Thyroid gland (tissue), 4 donors: ENCODE measurements at regions of chr1 and their contacts with region 1.

Region 1: DNA sequence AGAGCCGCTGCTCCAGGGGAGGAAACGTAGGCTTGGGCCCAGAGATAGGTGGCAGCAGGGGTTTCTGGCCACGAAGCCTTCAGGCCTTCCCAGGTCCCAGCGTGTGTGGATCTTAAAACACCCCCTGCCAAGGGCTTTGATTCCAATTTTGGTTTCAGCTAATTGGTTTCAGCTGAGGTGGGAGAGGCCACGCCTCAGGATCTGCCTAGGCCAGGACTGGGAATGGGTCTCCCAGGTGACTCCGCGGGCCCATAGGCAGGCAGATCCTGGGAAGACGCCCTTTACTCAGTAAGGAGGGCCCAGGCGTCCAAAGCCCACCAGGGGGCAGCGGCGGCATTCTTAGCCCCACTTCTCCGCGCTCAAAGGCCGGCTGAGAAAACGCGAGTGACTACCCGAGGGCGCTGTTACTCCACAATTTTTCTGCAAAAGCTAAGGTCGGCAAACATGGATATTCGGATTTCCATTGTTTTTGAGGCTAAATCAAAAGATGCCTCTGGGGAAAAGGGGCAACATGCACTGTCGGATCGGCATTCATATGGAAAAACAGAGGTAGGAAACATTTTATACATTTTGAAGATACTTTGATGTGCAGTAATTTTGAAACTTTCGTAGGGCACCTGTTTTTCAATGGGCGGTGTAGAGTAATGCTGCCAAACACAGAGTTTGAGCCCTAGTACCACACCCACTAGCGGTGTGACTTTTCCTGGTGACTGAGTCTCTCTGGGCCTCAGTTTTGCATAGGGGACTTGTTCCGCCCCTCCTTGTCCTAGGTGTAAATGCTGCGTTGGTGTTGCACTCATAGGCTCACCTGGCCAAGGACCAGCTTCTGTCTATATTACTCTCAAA is 31.8 kb upstream of the BCL10 start:
- DNase-seq: peak; percentile 89 to 92
- H3K4me3 ChIP-seq: no peak overlapping the region
- H3K27ac ChIP-seq: no peak overlapping the region
- H3K4me1 ChIP-seq: peaks cover 0 to 5% of the 10 kb centered on the region in 2 donors
- H3K27me3 ChIP-seq: no peaks in the 10 kb centered on the region
- CTCF ChIP-seq: peak; percentile 84 to 99 (median 95)
- POLR2A ChIP-seq: no peak

Region 2: GRCh38 chr1:85502625-85503083 is 194.4 kb after region 1 on chr1:
- intact Hi-C with region 1: loop called (anchors 10 kb)
- DNase-seq: peak; percentile 64 to 66
- H3K4me3 ChIP-seq: no peak overlapping the region
- H3K27ac ChIP-seq: no peak overlapping the region
- H3K4me1 ChIP-seq: peaks cover 0 to 4% of the 10 kb centered on the region in 2 donors
- H3K27me3 ChIP-seq: no peaks in the 10 kb centered on the region
- CTCF ChIP-seq: peak; percentile 24 to 70 (median 56)
- POLR2A ChIP-seq: no peak

Region 3: GRCh38 chr1:85580872-85581801 is 272.9 kb after region 1 on chr1:
- intact Hi-C with region 1: loop called (anchors 10 kb)
- DNase-seq: peak; percentile 79 to 82
- H3K4me3 ChIP-seq: peak overlapping the region; percentile 37 to 92 (median 86)
- H3K27ac ChIP-seq: peak overlapping the region; percentile 97 to 99 (median 99)
- H3K4me1 ChIP-seq: peaks cover 32 to 33% of the 10 kb centered on the region in 2 donors
- H3K27me3 ChIP-seq: no peaks in the 10 kb centered on the region
- CTCF ChIP-seq: peak; percentile 50 to 91 (median 78)
- POLR2A ChIP-seq: peak; percentile 3 to 62

Region 4: DNA sequence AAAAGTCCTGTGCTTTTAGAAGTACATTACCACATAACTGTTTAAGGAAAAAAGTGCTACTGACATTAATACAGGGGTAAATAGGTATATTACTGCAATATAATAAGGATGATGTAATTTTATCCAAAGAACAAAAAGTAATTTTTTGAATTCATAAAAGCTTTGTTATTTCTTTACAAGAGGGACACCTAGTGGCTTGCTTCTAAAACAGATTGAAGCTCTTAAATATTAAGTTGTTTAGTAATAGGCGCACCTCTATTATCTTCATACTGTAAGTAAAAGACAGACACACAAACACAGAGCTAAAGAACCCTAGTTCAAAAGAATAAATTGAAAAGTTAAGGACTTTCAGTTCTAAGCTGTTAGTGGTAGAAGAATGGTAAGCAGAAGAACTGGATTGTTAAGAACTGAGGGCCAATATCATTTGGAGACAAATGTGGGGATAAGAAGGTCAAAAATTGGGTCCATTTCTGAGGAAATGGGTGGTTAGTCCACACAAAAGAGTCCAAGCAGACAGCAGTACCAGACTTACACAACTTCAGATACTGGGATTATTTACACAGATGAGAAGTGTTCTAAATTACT is 384.6 kb after region 1 on chr1:
- intact Hi-C with region 1: loop called (anchors 2 kb)
- DNase-seq: no peak
- H3K4me3 ChIP-seq: no peak overlapping the region
- H3K27ac ChIP-seq: no peak overlapping the region
- H3K4me1 ChIP-seq: no peaks in the 10 kb centered on the region
- H3K27me3 ChIP-seq: no peaks in the 10 kb centered on the region
- CTCF ChIP-seq: peak in 3 of 6 experiments; percentile 55 to 73 (median 65)
- POLR2A ChIP-seq: no peak

Region 5: GRCh38 chr1:85884372-85885035 is 576.3 kb after region 1 on chr1:
- intact Hi-C with region 1: loop called (anchors 10 kb)
- DNase-seq: no peak
- H3K4me3 ChIP-seq: no peak overlapping the region
- H3K27ac ChIP-seq: no peak overlapping the region
- H3K4me1 ChIP-seq: no peaks in the 10 kb centered on the region
- H3K27me3 ChIP-seq: no peaks in the 10 kb centered on the region
- CTCF ChIP-seq: peak in 3 of 6 experiments; percentile 22 to 58 (median 39)
- POLR2A ChIP-seq: no peak